Tibial artery (tissue), 4 donors: ENCODE measurements at regions of chr6 and their contacts with region 1.

Region 1: DNA sequence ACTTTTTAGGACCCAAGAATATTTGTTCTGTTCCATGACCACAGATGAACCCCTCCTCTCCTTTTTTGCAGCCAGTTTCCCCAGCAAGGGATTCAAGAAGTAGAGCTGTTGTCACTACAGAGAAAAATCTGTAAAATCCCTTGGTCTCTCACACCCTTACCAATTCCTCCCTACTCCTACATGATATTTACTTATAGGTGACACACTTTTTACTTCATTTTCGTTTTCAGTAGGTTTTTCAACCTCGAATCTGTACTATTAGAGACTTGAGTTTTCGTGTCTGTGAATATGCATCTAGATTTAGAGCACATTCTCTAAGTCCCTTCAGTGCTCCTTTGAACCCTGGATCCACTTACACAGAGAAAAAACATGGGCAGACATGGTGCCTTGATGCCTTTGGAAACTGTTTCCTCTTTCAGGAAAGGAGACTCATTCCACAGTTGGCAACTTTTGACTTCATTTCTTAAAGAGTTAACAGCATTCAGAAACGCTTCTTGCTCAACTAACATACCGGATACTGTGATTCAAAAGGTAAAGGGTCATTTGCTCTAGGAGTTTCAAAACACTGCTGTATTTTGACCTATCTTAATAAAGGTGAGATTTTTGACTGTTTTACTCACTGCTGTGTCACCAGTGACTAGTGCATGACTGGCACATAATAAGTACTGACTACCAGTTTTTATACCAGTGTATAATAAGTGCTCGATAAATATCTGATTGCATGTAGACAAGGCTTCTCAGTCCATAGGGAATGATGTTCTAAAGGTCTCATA is 50.6 kb downstream of the LAMA4 start:
- DNase-seq: no peak
- H3K4me3 ChIP-seq: no peak overlapping the region
- H3K27ac ChIP-seq: peak overlapping the region; percentile 52 to 64
- H3K4me1 ChIP-seq: peaks cover 0 to 41% (median 18%) of the 10 kb centered on the region in 4 donors
- H3K27me3 ChIP-seq: no peaks in the 10 kb centered on the region
- CTCF ChIP-seq: no peak

Region 2: GRCh38 chr6:111781041-111781708 is 422.6 kb before region 1 on chr6:
- intact Hi-C with region 1: no loop called
- DNase-seq: no peak
- H3K4me3 ChIP-seq: no peak overlapping the region
- H3K27ac ChIP-seq: no peak overlapping the region
- H3K4me1 ChIP-seq: no peaks in the 10 kb centered on the region
- H3K27me3 ChIP-seq: no peaks in the 10 kb centered on the region
- CTCF ChIP-seq: no peak

Region 3: GRCh38 chr6:112253841-112254816 is 50.4 kb after region 1 on chr6 and contains the start of gene LAMA4:
- intact Hi-C with region 1: loop called (anchors 10 kb)
- DNase-seq: peak; percentile 36 to 72
- H3K4me3 ChIP-seq: peak within 1 kb of the TSS; percentile 78 to 86
- H3K27ac ChIP-seq: peak within 1 kb of the TSS; percentile 90 to 98
- H3K4me1 ChIP-seq: peaks cover 0 to 50% (median 17%) of the 10 kb centered on the region in 4 donors
- H3K27me3 ChIP-seq: no peaks in the 10 kb centered on the region
- CTCF ChIP-seq: no peak

Region 4: DNA sequence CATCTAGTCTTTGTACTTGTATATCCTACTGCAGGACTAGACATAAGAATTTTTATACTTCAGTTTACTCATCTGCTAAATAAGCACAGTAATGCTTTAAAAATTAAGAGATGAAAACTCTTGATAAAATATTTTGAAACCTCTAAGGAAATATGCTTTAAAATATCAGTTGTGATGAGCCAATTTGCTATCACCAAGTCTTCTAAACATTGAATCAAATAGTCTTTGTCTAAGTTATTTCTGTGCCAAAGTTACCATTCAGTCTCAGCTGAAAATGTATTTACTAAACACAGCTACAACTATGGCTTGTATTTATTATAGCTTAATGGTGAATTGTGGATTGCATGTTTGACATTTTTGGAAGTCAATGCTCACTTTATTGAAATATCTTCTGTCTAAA is 97.1 kb after region 1 on chr6:
- intact Hi-C with region 1: loop called (anchors 5 kb)
- DNase-seq: no peak
- H3K4me3 ChIP-seq: no peak overlapping the region
- H3K27ac ChIP-seq: no peak overlapping the region
- H3K4me1 ChIP-seq: peaks cover 4 to 20% (median 6%) of the 10 kb centered on the region in 4 donors
- H3K27me3 ChIP-seq: no peaks in the 10 kb centered on the region
- CTCF ChIP-seq: no peak